ENCODE measurements at regions of chr22 and their contacts with region 1.

Region 1: DNA sequence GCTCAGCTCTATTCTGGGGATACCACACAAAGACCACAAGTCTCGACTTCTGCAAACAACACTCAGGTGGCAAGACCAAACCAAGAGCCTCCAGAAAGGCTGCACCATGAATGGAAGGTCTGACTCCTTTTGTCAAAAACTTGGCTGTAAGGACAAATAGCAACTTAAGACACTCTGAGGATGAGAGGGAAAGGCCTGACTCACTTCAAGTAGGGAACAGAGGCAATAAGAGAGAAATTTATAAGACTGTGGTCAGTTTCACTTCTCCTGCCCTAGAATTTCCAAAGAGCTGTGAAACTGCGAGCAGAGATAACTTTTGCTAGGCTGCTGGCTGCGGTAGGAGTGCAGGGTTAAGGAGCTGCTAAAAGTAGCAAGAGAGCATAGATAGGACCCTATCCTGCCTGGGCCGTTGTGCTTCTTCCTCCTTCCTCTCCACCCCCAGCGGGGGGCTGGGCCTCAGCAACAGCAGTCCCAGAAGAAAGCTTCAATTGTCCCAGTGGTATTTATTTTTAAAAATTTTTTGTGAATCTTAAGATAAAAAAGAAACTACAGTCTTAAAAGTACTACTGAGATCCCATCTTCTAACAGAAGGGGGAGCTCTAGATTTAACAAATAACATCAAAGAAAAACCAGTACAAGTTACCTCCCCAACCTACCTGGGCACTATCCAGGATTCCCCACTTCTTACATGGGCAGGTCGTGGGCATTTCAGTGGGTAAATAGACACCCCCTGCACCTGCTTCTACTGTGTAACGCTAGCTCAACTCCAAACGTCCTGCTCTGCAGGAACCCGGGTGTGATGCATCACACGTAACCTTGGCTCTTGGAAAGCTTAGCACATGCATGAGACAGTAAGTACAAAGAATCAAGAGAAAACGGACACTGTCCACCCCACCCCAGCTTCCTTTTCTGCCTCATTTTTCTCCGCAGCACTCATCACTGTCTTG is 66.4 kb downstream of the SGSM3 start:
- DNase-seq: peak; percentile 41
- H3K4me3 ChIP-seq: peak overlapping the region; percentile 47
- H3K27ac ChIP-seq: peak overlapping the region; percentile 75
- H3K4me1 ChIP-seq: peaks cover 37% of the 10 kb centered on the region
- H3K27me3 ChIP-seq: no peaks in the 10 kb centered on the region
- CTCF ChIP-seq: peak; percentile 80

Region 2: GRCh38 chr22:40346178-40347118 is 90.3 kb before region 1 on chr22 and contains the start of gene ADSL:
- intact Hi-C with region 1: no loop called
- DNase-seq: peak; percentile 91
- H3K4me3 ChIP-seq: peak within 1 kb of the TSS; percentile 86
- H3K27ac ChIP-seq: peak within 1 kb of the TSS; percentile 95
- H3K4me1 ChIP-seq: peaks cover 39% of the 10 kb centered on the region
- H3K27me3 ChIP-seq: no peaks in the 10 kb centered on the region
- CTCF ChIP-seq: peak; percentile 40
- total RNA-seq, gene ADSL: 48.5 TPM

Region 3: GRCh38 chr22:40484906-40485669 is 48.3 kb after region 1 on chr22:
- intact Hi-C with region 1: loop called (anchors 5 kb)
- DNase-seq: no peak
- H3K4me3 ChIP-seq: no peak overlapping the region
- H3K27ac ChIP-seq: peak overlapping the region; percentile 16
- H3K4me1 ChIP-seq: peaks cover 64% of the 10 kb centered on the region
- H3K27me3 ChIP-seq: no peaks in the 10 kb centered on the region
- CTCF ChIP-seq: no peak

Region 4: DNA sequence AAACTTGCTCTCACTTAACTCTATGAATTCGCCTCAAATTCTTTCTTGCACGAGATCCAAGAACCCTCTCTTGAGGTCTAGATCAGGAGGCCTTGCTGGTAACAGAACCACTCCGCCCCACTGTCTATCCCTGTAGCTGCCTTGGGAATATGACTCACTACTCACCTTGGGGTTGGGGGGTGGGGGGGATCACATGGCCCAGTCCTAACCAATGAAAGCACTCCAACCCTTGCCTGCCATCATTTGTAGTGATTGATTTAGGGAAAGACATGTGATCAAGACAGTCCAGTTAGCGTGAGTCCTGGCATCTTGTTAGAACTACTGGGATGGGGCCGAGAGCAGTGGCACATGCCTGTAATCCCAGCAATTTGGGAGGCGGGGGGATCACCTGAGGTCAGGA is 204.5 kb after region 1 on chr22:
- intact Hi-C with region 1: loop called (anchors 5 kb)
- DNase-seq: no peak
- H3K4me3 ChIP-seq: no peak overlapping the region
- H3K27ac ChIP-seq: no peak overlapping the region
- H3K4me1 ChIP-seq: peaks cover 19% of the 10 kb centered on the region
- H3K27me3 ChIP-seq: no peaks in the 10 kb centered on the region
- CTCF ChIP-seq: no peak